Breast epithelium (tissue), 4 donors: ENCODE measurements at regions of chr4 and their contacts with region 1.

Region 1: DNA sequence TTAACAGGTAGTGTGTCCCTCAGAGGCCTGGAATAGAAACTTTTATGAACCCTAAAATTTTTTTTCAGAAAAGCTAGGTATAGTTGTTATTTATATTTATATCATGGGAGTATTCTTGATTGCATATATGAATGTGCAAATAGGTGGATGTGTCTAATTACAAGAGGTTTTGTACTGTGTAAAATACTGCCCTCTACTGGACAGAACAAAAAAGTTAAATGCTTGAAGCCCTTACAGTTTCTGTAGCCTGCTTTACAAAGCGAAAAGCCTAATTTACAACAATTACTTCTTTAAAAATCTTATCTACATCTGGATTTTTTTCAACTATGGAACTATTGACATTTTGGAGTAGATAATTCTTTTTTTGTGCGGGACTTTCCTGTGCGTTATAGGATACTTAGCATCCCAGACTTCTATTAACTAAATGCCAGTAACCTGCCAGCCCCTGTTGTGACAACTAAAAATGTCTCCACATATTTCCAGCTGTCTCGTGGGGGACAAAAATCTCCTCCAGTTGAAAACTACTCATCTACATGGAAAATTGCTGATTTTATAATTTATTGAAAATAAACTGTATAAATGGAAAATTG is 35.1 kb downstream of the ENPEP start:
- DNase-seq: no peak
- H3K4me3 ChIP-seq: no peak overlapping the region
- H3K27ac ChIP-seq: no peak overlapping the region
- H3K4me1 ChIP-seq: no peaks in the 10 kb centered on the region
- H3K27me3 ChIP-seq: no peaks in the 10 kb centered on the region
- CTCF ChIP-seq: peak; percentile 35 to 53 (median 52)
- POLR2A ChIP-seq: no peak

Region 2: GRCh38 chr4:109977854-109978501 is 533.1 kb before region 1 on chr4:
- intact Hi-C with region 1: loop called (anchors 5 kb)
- DNase-seq: no peak
- H3K4me3 ChIP-seq: no peak overlapping the region
- H3K27ac ChIP-seq: no peak overlapping the region
- H3K4me1 ChIP-seq: no peaks in the 10 kb centered on the region
- H3K27me3 ChIP-seq: no peaks in the 10 kb centered on the region
- CTCF ChIP-seq: peak in 2 of 3 donors; percentile 43 to 45
- POLR2A ChIP-seq: no peak

Region 3: DNA sequence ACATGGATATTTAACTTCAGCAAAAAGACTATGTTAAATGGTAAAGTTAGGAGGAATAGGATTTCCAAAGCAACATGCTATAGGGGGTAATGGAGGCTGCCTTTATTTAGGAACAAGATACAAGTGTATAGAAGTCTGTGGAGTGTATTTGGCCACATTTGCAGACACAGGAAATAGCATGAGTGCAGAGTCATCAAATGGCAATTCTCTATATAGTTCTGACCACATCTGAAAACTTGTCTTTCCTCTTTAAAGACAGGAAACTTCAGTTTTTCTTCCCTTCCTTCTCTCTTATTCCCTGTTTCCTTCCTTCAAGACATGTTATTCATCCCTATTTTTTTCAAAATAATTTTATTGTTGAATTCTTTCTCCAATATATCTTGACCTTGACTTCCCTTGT is 231.1 kb after region 1 on chr4:
- intact Hi-C with region 1: no loop called
- DNase-seq: no peak
- H3K4me3 ChIP-seq: no peak overlapping the region
- H3K27ac ChIP-seq: no peak overlapping the region
- H3K4me1 ChIP-seq: no peaks in the 10 kb centered on the region
- H3K27me3 ChIP-seq: no peaks in the 10 kb centered on the region
- CTCF ChIP-seq: no peak
- POLR2A ChIP-seq: no peak